Left ventricle myocardium superior (tissue), 1 donor: ENCODE measurements at regions of chr16 and their contacts with region 1.

Region 1: DNA sequence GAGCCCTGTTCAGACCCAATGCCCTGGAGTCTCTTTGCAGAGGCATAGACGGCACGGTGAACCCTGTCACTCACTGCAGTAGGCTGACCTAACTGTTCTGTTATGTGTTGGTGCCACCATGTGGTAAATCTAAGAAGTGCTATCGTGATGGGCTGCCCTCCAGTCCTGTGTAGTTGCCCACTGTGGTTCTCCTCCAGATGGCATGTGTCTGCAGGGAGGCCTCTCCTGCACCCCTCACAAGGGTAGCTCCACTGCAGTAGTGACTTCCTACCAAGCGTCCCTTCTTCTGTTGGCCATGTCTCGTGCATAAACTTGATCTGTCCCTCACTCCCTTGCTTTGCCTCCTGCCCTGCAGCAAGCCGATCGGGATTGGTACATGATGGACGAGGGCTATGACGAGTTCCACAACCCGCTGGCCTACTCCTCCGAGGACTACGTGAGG is 5.8 kb downstream of the DHX38 start:
- DNase-seq: no peak
- ATAC-seq: peak; percentile 87

Region 2: GRCh38 chr16:72066747-72067146 is 32.7 kb before region 1 on chr16:
- intact Hi-C with region 1: loop called (anchors 2 kb)
- DNase-seq: no peak
- ATAC-seq: peak; percentile 60